Heart right ventricle (tissue), 16 donors: ENCODE measurements at regions of chr20 and their contacts with region 1.

Region 1: GRCh38 chr20:38893565-38894090 is 32.6 kb upstream of the FAM83D start:
- DNase-seq: peak; percentile 52 to 75
- ATAC-seq: peak; percentile 83 to 94 (median 90)
- H3K4me3 ChIP-seq: no peak overlapping the region
- H3K27ac ChIP-seq: peak overlapping the region in 2 of 10 donors; percentile 9 to 68
- H3K4me1 ChIP-seq: peaks cover 0 to 17% (median 8%) of the 10 kb centered on the region in 9 donors
- H3K27me3 ChIP-seq: peaks cover 0 to 15% (median 3%) of the 10 kb centered on the region in 7 donors
- CTCF ChIP-seq: peak; percentile 84 to 95 (median 93)

Region 2: DNA sequence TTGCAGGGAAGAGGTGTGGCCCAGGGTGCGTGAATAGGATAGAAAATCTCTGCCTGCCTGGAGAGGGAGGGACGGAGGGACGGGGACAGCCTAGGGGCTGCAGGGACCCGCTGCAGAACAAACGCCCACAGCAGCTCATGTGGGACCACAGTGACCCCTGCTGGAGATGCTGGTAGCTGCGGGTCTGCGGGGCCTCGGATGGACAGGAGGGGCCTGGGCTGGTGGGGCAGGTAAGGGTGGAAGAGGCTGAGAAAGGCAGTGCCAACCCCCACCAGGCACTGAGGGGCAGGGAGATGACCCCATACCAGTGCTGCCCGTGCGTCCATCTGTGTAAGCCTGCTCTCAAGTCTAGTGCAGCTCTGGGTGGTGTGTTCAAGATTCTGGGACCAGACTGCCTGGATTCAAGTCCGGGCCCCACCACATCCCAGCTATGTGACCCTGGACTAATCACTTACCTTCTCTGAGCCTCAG is 672.5 kb before region 1 on chr20:
- intact Hi-C with region 1: no loop called
- DNase-seq: peak; percentile 58 to 78
- ATAC-seq: peak; percentile 34 to 77 (median 64)
- H3K4me3 ChIP-seq: no peak overlapping the region
- H3K27ac ChIP-seq: no peak overlapping the region
- H3K4me1 ChIP-seq: peaks cover 0 to 22% (median 3%) of the 10 kb centered on the region in 9 donors
- H3K27me3 ChIP-seq: no peaks in the 10 kb centered on the region
- CTCF ChIP-seq: peak; percentile 82 to 94 (median 91)

Region 3: GRCh38 chr20:38730989-38731737 is 162.5 kb before region 1 on chr20:
- intact Hi-C with region 1: loop called in 1 of 10 experiments (anchors 10 kb)
- DNase-seq: peak; percentile 49 to 73
- ATAC-seq: peak; percentile 75 to 93 (median 81)
- H3K4me3 ChIP-seq: peak overlapping the region in 8 of 10 donors; percentile 13 to 46 (median 27)
- H3K27ac ChIP-seq: no peak overlapping the region
- H3K4me1 ChIP-seq: peaks cover 0 to 53% (median 40%) of the 10 kb centered on the region in 9 donors
- H3K27me3 ChIP-seq: peaks cover 45 to 100% (median 100%) of the 10 kb centered on the region in 7 donors
- CTCF ChIP-seq: peak; percentile 84 to 99 (median 97)

Region 4: DNA sequence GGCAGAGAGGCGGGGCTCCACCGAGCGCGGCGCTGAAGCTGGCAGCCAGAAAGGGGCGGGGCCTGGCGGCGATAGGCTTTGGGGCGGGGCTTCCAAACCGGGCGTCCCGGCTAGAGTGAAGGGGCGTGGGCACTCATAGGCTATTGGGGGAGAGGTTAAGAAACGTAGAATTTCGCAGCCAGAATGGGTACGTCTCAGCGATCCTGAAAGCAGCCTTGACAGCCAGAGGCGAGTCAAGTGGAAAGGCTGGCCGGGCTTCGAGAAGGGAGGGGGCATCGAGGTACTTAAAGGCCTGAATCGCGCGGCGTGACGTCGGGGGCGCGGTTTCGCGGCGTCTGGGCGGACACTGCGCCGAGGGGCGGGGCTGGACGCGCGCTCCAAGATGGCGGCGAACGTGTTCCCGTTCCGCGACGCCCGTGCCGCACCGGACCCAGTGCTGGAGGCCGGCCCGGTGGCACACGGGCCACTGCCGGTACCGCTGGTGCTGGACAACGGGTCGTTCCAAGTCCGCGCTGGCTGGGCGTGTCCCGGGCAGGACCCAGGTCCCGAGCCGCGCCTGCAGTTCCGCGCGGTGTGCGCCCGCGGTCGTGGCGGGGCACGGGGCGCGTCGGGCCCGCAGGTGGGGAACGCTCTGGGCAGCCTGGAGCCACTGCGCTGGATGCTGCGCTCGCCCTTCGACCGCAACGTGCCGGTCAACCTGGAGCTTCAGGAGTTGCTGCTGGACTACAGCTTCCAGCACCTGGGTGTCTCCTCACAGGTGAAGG is 145.3 kb before region 1 on chr20 and contains the start of gene ACTR5:
- intact Hi-C with region 1: loop called in 3 of 10 experiments (anchors 5 to 10 kb)
- DNase-seq: peak; percentile 94 to 96
- ATAC-seq: peak; percentile 98 to 99 (median 99)
- H3K4me3 ChIP-seq: peak within 1 kb of the TSS; percentile 66 to 96 (median 82)
- H3K27ac ChIP-seq: peak within 1 kb of the TSS; percentile 36 to 89 (median 84)
- H3K4me1 ChIP-seq: peaks cover 0 to 21% (median 17%) of the 10 kb centered on the region in 9 donors
- H3K27me3 ChIP-seq: peaks cover 0 to 14% (median 8%) of the 10 kb centered on the region in 7 donors
- CTCF ChIP-seq: no peak
- total RNA-seq, gene ACTR5: 1.5 to 4.1 (median 2.8) TPM

Region 5: GRCh38 chr20:38805502-38805957 is 88.1 kb before region 1 on chr20 and contains the start of gene PPP1R16B:
- intact Hi-C with region 1: loop called in 3 of 10 experiments (anchors 5 to 10 kb)
- DNase-seq: peak; percentile 62 to 75
- ATAC-seq: peak; percentile 82 to 93 (median 91)
- H3K4me3 ChIP-seq: peak within 1 kb of the TSS; percentile 65 to 84 (median 80)
- H3K27ac ChIP-seq: peak within 1 kb of the TSS; percentile 79 to 93 (median 88)
- H3K4me1 ChIP-seq: peaks cover 4 to 74% (median 41%) of the 10 kb centered on the region in 9 donors
- H3K27me3 ChIP-seq: peaks cover 10 to 45% (median 28%) of the 10 kb centered on the region in 7 donors
- CTCF ChIP-seq: no peak
- total RNA-seq, gene PPP1R16B: 2.7 to 13.8 (median 6.6) TPM